ENCODE measurements at regions of chr9 and their contacts with region 1.

Region 1: DNA sequence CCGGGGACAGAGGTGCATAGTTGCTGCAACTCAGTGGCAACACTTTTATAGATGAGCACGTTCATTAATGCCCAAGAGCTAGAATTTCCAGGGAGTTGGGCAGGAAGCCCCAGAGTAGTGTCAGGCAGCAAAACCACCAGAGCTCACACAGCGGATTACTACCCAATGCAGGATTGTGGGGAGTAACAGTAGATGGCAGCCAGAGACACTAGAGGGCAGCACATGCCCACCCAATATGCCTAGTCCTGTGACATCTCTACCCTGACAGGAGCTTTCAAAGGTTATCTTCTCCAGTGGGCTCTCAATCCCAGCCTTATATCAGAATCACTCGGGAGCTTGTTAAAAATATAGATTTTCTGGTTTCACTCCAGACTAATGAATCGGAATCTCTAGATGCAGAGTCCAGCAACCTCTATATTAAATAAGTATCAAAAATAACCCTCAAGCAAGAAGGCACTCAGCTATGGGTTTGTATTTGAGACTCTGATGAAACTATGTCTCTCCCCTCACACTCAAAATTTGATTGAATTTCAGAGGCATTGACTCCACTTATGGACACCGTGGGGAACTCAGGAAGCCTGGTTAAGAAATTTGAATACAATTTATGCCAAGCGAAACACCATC is 58.4 kb upstream of the PHF24 start:
- DNase-seq: peak; percentile 60
- H3K4me3 ChIP-seq: no peak overlapping the region
- H3K27ac ChIP-seq: no peak overlapping the region
- H3K4me1 ChIP-seq: no peaks in the 10 kb centered on the region
- H3K27me3 ChIP-seq: peaks cover 2% of the 10 kb centered on the region
- CTCF ChIP-seq: peak; percentile 74 to 89

Region 2: DNA sequence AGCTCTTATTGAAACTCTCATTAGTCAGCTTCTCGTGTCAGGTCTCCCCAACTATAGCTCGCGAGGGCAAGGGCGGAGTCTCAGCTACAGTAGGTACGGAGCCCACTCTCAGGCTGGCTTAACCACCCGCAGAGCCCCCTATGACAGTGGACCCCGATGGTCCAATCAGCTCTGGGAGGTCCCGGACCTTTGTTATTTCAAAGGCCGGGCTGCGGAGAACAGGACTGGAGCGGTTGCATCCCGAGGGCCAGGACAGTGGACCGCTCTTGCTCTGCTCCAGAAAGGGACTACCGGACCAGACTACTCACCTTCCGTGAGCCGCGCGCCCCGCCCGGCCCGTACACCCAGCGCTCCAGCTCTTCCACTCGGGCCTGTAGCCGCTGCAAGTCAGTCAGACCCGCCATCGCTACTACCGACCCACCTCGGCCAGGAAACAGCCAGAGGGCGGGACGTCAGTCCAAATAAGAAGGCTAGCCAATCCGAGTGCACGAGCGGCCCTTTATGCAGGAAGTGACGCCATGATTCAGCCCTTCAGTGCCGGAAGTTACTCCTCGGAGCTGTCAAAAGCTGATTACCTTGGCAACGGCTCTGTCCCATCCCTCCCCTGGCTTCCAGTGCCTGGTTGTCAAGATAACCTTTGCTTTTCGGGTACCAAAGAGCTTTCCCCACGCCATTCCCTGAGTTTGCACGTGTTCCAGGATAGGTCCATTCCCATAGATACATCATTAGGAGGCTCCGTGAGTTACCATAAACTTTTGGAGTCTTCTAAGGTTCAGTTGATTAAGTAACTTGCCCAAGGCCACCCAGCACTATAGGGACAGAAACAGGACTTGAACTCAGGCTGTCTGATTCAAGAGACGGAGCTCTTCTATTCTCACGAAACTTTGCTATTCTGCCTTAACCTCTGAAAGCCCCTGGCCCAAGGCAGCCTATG is 279.3 kb before region 1 on chr9 and contains the start of gene DCTN3:
- CTCF ChIA-PET with region 1: no interaction called
- dilution Hi-C with region 1: no loop called
- in situ Hi-C with region 1: no loop called
- intact Hi-C with region 1: no loop called
- DNase-seq: peak; percentile 86
- H3K4me3 ChIP-seq: peak within 1 kb of the TSS; percentile 71 to 79 (median 77)
- H3K27ac ChIP-seq: peak within 1 kb of the TSS; percentile 62
- H3K4me1 ChIP-seq: peaks cover 6% of the 10 kb centered on the region
- H3K27me3 ChIP-seq: no peaks in the 10 kb centered on the region
- CTCF ChIP-seq: no peak
- total RNA-seq, gene DCTN3: 53.8 to 91.3 TPM

Region 3: DNA sequence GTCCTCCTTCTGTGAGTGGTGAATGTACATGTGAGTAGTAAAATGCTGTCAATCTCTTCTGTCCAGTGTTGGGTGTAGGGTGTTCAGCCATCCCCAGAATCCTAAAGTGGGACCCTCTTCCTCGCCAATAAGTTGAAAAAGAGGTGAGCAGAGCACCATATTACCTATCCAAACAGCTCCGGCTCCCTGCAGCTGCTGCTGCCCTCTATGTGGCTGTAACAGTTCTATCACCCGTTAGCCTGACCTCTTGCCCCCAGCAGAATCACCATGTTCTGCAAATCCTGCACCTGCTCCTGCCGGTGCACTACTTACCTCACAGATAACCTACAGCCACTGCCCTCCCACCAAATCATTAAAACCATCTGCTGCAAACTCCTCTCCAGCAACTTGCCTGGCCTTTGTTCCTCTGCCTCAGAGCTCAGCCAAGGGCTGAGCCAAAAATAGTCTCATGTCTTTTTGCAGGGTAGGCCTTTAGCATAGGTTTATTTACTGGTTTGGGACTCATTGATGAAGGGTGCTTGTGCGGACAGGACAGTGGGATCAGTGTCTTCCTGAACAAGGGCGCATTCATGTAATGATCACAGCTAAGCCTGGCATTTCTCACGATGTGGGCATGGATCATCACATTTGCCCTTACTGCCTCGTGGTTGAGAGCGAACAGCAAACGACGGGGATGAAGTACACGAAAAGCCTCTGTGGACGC is 140.1 kb before region 1 on chr9:
- CTCF ChIA-PET with region 1: no interaction called
- dilution Hi-C with region 1: no loop called
- in situ Hi-C with region 1: no loop called
- intact Hi-C with region 1: loop called (anchors 2 kb)
- DNase-seq: no peak
- H3K4me3 ChIP-seq: no peak overlapping the region
- H3K27ac ChIP-seq: no peak overlapping the region
- H3K4me1 ChIP-seq: no peaks in the 10 kb centered on the region
- H3K27me3 ChIP-seq: no peaks in the 10 kb centered on the region
- CTCF ChIP-seq: no peak

Region 4: GRCh38 chr9:34862043-34862442 is 37.6 kb before region 1 on chr9:
- CTCF ChIA-PET with region 1: no interaction called
- dilution Hi-C with region 1: no loop called
- in situ Hi-C with region 1: no loop called
- intact Hi-C with region 1: no loop called
- DNase-seq: no peak
- H3K4me3 ChIP-seq: no peak overlapping the region
- H3K27ac ChIP-seq: no peak overlapping the region
- H3K4me1 ChIP-seq: no peaks in the 10 kb centered on the region
- H3K27me3 ChIP-seq: no peaks in the 10 kb centered on the region
- CTCF ChIP-seq: no peak

Region 5: DNA sequence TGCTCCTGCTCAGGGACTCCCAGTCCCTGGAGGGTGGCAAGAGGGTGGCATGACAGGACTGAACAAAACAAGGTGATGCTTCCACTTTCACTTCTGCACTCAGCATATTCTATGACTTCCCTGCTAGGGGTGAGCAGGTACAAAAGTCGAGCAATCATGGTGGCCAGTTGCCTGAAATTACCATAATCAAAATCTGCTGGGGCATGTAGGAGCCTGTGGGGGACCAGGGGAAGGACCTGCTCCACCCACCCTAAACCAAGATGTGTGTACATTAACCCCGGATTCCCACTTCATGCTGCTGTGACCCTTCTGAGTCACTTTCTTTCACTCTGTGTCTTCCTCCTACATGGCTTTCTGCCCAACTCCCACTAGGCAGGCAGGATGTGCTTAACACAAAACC is 14.9 kb before region 1 on chr9:
- CTCF ChIA-PET with region 1: no interaction called
- dilution Hi-C with region 1: no loop called
- in situ Hi-C with region 1: no loop called
- intact Hi-C with region 1: no loop called
- DNase-seq: peak; percentile 54
- H3K4me3 ChIP-seq: no peak overlapping the region
- H3K27ac ChIP-seq: no peak overlapping the region
- H3K4me1 ChIP-seq: peaks cover 10% of the 10 kb centered on the region
- H3K27me3 ChIP-seq: no peaks in the 10 kb centered on the region
- CTCF ChIP-seq: no peak

Region 6: DNA sequence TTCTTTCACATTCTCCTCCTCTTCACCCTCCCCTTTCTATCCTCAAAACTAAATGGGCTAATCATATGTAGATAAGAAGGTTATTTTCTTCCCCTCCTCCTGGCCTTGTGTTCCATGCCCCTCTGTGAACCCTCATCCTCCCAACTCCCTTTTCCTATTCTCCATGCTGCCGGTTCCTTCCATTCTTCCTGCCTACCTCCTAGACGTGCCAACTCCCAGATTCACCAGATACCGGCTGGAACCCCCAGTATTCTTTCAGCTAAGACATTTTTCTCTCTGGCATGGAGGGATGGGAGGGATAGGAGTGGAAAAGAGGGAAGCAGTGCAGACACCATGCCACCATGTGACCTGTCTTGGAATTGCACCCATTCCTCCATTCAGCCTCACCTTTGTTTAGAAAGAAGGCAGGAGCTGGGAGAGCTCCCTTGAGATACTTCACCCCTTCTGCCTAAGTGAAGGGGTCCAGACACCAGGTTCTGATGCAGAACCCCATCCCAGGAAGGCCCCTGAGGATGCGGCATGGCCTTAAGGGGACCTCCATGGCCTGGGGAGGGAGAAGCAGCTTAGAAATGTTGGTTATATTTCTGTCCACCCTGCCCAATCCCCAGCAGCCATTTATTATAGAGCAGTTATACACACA is 94.7 kb after region 1 on chr9:
- CTCF ChIA-PET with region 1: interaction called, 6 read pairs
- dilution Hi-C with region 1: no loop called
- in situ Hi-C with region 1: loop called in 1 of 2 experiments (anchors 10 kb)
- intact Hi-C with region 1: loop called (anchors 1 kb)
- DNase-seq: peak; percentile 43
- H3K4me3 ChIP-seq: no peak overlapping the region
- H3K27ac ChIP-seq: no peak overlapping the region
- H3K4me1 ChIP-seq: peaks cover 36% of the 10 kb centered on the region
- H3K27me3 ChIP-seq: no peaks in the 10 kb centered on the region
- CTCF ChIP-seq: peak; percentile 82

Region 7: GRCh38 chr9:35096035-35096849 is 196.6 kb after region 1 on chr9 and contains the start of gene PIGO:
- CTCF ChIA-PET with region 1: interaction called, 4 read pairs
- dilution Hi-C with region 1: no loop called
- in situ Hi-C with region 1: no loop called
- intact Hi-C with region 1: loop called (anchors 1 kb)
- DNase-seq: peak; percentile 84
- H3K4me3 ChIP-seq: peak within 1 kb of the TSS; percentile 76 to 100 (median 82)
- H3K27ac ChIP-seq: peak within 1 kb of the TSS; percentile 91
- H3K4me1 ChIP-seq: peaks cover 7% of the 10 kb centered on the region
- H3K27me3 ChIP-seq: no peaks in the 10 kb centered on the region
- CTCF ChIP-seq: peak; percentile 93
- total RNA-seq, gene PIGO: 17.8 to 33.3 TPM

Region 8: GRCh38 chr9:35161713-35162604 is 262.3 kb after region 1 on chr9 and contains the start of gene UNC13B:
- CTCF ChIA-PET with region 1: no interaction called
- dilution Hi-C with region 1: no loop called
- in situ Hi-C with region 1: no loop called
- intact Hi-C with region 1: no loop called
- DNase-seq: peak; percentile 91
- H3K4me3 ChIP-seq: peak within 1 kb of the TSS; percentile 71 to 97 (median 90)
- H3K27ac ChIP-seq: peak within 1 kb of the TSS; percentile 53
- H3K4me1 ChIP-seq: peaks cover 13% of the 10 kb centered on the region
- H3K27me3 ChIP-seq: no peaks in the 10 kb centered on the region
- CTCF ChIP-seq: peak in 1 of 2 donors; percentile 28
- total RNA-seq, gene UNC13B: 20.0 to 22.3 TPM

Region 9: DNA sequence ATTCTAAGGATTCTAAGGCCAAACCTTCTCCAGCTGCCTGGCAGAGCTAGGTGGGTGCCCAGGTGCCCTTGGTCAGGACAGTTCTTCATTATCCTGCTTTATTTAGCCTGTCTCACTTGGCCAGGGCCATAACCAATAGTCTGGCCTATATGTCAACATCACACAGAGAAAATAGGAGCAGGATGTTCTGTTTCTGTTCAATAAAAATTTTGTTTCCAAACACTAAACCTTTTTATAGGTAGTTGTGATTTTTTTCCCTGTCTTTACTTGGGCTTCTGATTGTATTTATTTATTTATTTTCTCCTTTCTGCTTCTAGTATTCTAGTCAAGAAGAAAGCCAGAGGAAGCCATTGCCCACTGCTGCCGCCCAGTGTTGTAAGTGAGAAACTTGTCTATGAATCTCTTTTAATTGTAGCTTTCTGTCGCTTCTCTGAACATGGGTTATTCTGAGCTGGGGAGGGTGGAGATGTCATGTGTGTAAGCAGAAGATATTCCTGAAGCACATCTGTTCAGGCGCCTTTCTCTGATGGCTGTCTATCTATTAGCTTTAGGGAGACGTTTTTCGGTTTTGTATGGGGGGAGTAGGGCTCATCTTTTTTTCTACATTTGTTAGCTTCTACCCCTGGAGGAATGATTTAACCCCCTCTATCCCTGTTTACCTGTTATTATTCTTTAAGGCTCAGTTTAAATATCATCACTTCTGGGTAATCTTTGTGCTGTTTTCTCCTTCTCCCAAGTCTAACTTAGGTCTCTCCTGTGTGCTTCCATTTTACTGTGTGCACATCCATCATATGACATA is 359.2 kb after region 1 on chr9:
- CTCF ChIA-PET with region 1: interaction called, 3 read pairs
- dilution Hi-C with region 1: no loop called
- in situ Hi-C with region 1: no loop called
- intact Hi-C with region 1: loop called (anchors 1 kb)
- DNase-seq: peak; percentile 51
- H3K4me3 ChIP-seq: no peak overlapping the region
- H3K27ac ChIP-seq: no peak overlapping the region
- H3K4me1 ChIP-seq: no peaks in the 10 kb centered on the region
- H3K27me3 ChIP-seq: no peaks in the 10 kb centered on the region
- CTCF ChIP-seq: peak; percentile 58 to 74